ENCODE measurements at regions of chr7 and their contacts with region 1.

Region 1: GRCh38 chr7:77409739-77410547 is 6.2 kb downstream of the GSAP start:
- DNase-seq: no peak
- H3K4me3 ChIP-seq: no peak overlapping the region
- H3K4me3 Mint-ChIP-seq: peak overlapping the region; percentile 58
- H3K27ac Mint-ChIP-seq: peak overlapping the region; percentile 36
- H3K4me1 ChIP-seq: peaks cover 32% of the 10 kb centered on the region
- H3K4me1 Mint-ChIP-seq: peaks cover 28% of the 10 kb centered on the region
- H3K27me3 ChIP-seq: no peaks in the 10 kb centered on the region
- H3K27me3 Mint-ChIP-seq: no peaks in the 10 kb centered on the region
- CTCF ChIP-seq: no peak

Region 2: DNA sequence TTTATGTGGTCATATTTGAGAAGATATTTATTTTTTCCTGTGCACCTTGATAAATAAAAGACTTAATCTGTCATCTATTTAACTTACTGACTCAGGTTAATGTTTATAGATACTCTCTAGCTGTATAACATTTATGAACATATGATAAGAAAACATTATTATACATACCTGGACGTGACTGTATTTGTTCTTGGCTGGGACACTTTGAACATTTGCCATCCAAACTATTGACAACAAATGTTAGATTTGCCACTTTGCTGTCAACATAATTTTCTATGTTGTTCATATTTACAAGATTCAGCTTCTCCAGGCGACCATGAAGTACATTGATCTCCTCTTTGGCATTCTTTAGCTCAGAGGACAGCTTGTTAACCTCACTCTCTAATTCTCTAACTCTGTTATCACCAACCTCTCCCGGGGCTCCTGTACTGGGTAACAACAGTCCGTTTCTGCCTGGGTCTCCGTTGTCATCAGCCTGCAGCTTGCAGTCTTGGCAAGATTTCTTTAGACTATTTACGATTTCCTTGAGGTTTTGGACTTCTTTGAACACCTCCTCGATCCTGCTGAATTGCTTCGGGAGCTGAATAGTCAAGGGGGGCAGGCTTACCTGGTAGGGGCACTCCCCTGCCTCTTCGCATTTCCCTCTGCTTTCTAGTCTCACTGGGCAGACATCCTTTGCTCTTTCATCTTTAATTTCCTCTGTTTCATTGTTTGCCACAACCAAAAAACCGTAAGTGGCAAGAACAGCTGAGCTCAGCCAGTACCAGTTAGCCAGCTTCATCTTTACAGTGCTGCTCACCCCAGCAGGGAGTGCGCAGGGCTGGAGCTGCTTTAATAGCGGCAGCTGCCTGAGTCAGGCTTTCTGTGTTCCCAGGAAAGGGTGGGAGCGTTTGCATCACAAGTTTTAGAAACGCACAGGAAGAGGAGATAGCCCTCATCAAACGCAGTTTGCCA is 210.7 kb before region 1 on chr7 and contains the start of gene FGL2:
- CTCF ChIA-PET with region 1: no interaction called
- POLR2A ChIA-PET with region 1: no interaction called
- intact Hi-C with region 1: no loop called
- DNase-seq: no peak
- H3K4me3 ChIP-seq: no peak within 1 kb of the TSS
- H3K4me3 Mint-ChIP-seq: no peak within 1 kb of the TSS
- H3K27ac Mint-ChIP-seq: no peak within 1 kb of the TSS
- H3K4me1 ChIP-seq: no peaks in the 10 kb centered on the region
- H3K4me1 Mint-ChIP-seq: no peaks in the 10 kb centered on the region
- H3K27me3 ChIP-seq: no peaks in the 10 kb centered on the region
- H3K27me3 Mint-ChIP-seq: peaks cover 2% of the 10 kb centered on the region
- CTCF ChIP-seq: no peak
- total RNA-seq, gene FGL2: not detected in 2 replicates

Region 3: GRCh38 chr7:77396894-77397547 is 12.9 kb before region 1 on chr7:
- CTCF ChIA-PET with region 1: no interaction called
- POLR2A ChIA-PET with region 1: interaction called, 3 read pairs
- intact Hi-C with region 1: loop called (anchors 1 kb)
- DNase-seq: no peak
- H3K4me3 ChIP-seq: no peak overlapping the region
- H3K4me3 Mint-ChIP-seq: no peak overlapping the region
- H3K27ac Mint-ChIP-seq: no peak overlapping the region
- H3K4me1 ChIP-seq: peaks cover 31% of the 10 kb centered on the region
- H3K4me1 Mint-ChIP-seq: peaks cover 30% of the 10 kb centered on the region
- H3K27me3 ChIP-seq: no peaks in the 10 kb centered on the region
- H3K27me3 Mint-ChIP-seq: no peaks in the 10 kb centered on the region
- CTCF ChIP-seq: no peak

Region 4: DNA sequence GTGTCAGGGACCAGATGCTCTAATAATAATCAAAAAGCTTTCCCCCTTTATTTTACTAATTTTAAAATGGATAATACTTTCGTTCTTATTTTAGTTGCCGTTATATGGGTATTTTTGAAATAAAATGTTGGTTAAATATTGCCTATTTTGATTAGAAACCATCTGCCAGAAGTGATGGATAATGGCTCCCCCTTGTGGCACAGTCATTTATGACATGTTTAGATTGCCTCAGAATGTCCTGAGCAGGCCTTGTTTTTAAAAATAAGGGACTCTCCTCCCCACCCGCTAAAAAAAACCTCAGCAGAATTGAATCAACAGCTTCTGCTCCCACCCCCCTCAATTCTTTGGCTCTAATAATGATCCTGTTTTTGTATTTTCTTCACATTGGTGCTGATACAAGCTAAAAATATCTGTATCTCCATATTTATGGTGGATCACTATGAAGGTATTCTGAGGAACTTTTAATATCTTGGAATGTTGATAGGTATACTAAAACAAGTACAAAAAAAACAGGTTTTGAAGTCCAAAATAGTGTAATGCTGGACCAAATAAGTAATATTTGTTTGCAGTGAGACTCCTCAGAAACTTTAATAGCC is 349.4 kb after region 1 on chr7:
- CTCF ChIA-PET with region 1: no interaction called
- POLR2A ChIA-PET with region 1: no interaction called
- intact Hi-C with region 1: no loop called
- DNase-seq: peak; percentile 52 to 79
- H3K4me3 ChIP-seq: no peak overlapping the region
- H3K4me3 Mint-ChIP-seq: no peak overlapping the region
- H3K27ac Mint-ChIP-seq: no peak overlapping the region
- H3K4me1 ChIP-seq: peaks cover 5% of the 10 kb centered on the region; the same call in 1 of the 2 replicates
- H3K4me1 Mint-ChIP-seq: peaks cover 6% of the 10 kb centered on the region
- H3K27me3 ChIP-seq: no peaks in the 10 kb centered on the region
- H3K27me3 Mint-ChIP-seq: no peaks in the 10 kb centered on the region
- CTCF ChIP-seq: peak; percentile 71 to 79

Region 5: DNA sequence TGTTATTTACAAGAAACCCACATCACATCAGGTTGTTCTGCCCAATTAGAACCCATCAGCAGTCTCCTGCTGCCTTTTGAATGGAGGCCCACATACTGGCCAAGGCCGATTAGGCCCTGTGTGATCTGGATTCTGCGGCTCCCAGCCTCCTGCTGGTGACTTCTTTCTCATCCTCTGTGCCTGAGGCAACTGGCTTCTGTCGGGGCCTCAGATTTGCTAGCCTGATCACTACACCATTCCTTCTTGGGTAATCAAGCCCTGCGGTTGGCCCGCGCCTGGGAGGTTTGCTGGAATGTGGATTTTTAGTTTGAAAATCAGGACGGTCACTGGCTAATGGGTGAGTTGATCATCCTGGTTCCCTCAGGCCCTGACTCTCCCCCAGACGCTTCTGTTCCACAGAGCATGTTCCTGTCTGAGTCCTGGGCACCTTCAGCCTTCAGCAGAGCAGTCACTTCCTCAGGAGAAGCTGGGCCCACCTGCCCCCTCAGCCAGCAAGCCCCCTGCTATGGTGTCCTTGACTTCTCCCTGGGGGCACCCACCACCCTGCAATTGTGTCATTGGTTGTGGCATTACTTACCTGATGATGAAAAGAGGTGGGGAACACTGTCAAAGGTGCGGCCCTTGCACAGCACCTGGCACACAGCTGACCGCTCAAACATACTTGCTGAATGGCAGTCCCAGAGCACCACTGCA is 596.3 kb after region 1 on chr7:
- CTCF ChIA-PET with region 1: no interaction called
- POLR2A ChIA-PET with region 1: no interaction called
- intact Hi-C with region 1: no loop called
- DNase-seq: no peak
- H3K4me3 ChIP-seq: no peak overlapping the region
- H3K4me3 Mint-ChIP-seq: no peak overlapping the region
- H3K27ac Mint-ChIP-seq: no peak overlapping the region
- H3K4me1 ChIP-seq: no peaks in the 10 kb centered on the region
- H3K4me1 Mint-ChIP-seq: no peaks in the 10 kb centered on the region
- H3K27me3 ChIP-seq: no peaks in the 10 kb centered on the region
- H3K27me3 Mint-ChIP-seq: no peaks in the 10 kb centered on the region
- CTCF ChIP-seq: no peak

Measured in Caco-2 (cell line).